PC-9 (cell line): ENCODE measurements at regions of chr4 and their contacts with region 1.

Region 1: DNA sequence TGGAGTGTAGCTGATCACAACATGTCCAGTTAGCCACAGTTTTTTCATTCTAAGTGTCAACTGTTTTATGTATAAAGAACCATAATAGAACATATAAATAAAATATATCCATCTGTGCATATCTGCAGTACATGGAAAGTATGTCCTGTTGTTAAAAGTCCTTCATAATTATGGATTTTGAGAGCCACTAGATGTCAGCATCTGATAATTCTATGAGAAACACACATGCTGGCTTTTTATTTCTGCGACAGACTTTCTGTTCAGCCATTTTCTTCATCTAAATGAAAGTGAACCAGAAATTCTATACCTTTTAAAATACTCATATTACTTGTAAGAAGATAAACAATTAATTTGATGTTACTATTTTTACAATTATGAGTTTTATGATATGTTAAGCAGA is 251.5 kb downstream of the GPM6A start:
- DNase-seq: no peak
- H3K4me3 ChIP-seq: no peak overlapping the region
- H3K27ac ChIP-seq: no peak overlapping the region
- H3K4me1 ChIP-seq: no peaks in the 10 kb centered on the region
- H3K27me3 ChIP-seq: no peaks in the 10 kb centered on the region
- CTCF ChIP-seq: peak; percentile 44

Region 2: DNA sequence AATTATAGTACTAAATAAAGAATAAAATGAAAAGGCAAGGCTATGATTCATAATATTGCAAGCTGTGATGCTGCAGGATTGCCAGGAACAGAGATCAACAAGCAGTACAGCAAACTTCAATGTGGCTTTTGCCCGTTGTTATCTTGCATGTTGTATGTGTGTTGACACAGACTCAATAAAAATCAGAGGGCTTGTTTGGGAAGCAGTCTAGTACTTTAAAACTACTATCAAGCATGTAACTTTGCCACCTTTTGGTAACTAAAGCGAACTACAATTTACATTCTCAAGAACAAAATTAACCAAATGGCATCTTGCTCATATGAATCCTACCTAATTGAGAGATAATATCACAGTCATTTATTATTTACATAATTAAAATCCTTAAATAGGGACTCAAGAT is 331.2 kb after region 1 on chr4:
- CTCF ChIA-PET with region 1: no interaction called
- POLR2A ChIA-PET with region 1: no interaction called
- intact Hi-C with region 1: loop called (anchors 1 kb)
- DNase-seq: no peak
- H3K4me3 ChIP-seq: no peak overlapping the region
- H3K27ac ChIP-seq: no peak overlapping the region
- H3K4me1 ChIP-seq: no peaks in the 10 kb centered on the region
- H3K27me3 ChIP-seq: no peaks in the 10 kb centered on the region
- CTCF ChIP-seq: peak; percentile 53

Region 3: GRCh38 chr4:176123710-176124407 is 563.3 kb after region 1 on chr4:
- CTCF ChIA-PET with region 1: no interaction called
- POLR2A ChIA-PET with region 1: no interaction called
- intact Hi-C with region 1: loop called (anchors 10 kb)
- DNase-seq: peak in 1 of 2 experiments; percentile 2
- H3K4me3 ChIP-seq: no peak overlapping the region
- H3K27ac ChIP-seq: no peak overlapping the region
- H3K4me1 ChIP-seq: no peaks in the 10 kb centered on the region
- H3K27me3 ChIP-seq: no peaks in the 10 kb centered on the region
- CTCF ChIP-seq: peak; percentile 67; the same call in 1 of the 2 replicates